ENCODE measurements at regions of chr18 and their contacts with region 1.

Region 1: GRCh38 chr18:36942264-36942663 is 113.3 kb downstream of the KIAA1328 start:
- DNase-seq: peak; percentile 59
- CTCF ChIP-seq: peak; percentile 80

Region 2: DNA sequence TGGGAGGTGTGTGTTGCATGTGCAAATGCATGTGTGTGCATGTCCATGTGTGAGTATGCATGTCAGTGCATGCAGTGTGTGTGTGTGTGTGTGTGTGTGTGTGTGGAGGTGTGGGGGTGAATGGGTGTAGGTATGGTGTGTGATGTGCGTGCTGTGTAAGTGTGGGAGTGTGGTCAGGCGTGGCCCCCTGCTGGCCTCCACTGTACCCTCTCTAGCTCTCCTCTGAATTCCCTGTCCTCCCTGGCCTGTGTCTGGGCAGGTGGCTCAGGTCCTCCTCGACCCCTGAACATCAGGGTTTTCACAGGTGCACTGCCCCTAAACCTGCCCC is 393.1 kb after region 1 on chr18:
- in situ Hi-C with region 1: loop called (anchors 25 kb)
- DNase-seq: no peak
- CTCF ChIP-seq: no peak

Region 3: DNA sequence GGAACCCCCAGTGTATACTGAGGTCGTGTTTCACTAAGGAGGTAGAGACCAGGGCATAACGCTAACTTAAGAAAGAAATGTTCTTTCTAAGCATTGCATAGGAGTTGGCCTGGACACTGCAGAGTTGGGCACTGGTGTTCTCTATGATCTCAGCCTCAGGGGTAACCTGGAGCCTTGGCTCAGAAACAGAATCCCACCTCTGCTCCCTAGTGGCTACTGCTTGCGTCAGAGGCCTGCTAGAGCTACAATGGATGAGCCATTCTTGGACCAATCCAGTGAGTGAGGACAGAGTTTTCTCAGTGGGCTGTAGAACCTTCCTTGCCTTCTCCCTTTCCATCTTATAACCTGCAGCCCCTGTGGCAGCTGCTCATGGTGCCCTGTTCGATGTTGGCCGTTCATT is 947.7 kb after region 1 on chr18:
- in situ Hi-C with region 1: no loop called
- DNase-seq: no peak
- CTCF ChIP-seq: no peak

Measured in GM13977 (cell line).